Endothelial cell of umbilical vein (primary cell): ENCODE measurements at regions of chr20 and their contacts with region 1.

Region 1: DNA sequence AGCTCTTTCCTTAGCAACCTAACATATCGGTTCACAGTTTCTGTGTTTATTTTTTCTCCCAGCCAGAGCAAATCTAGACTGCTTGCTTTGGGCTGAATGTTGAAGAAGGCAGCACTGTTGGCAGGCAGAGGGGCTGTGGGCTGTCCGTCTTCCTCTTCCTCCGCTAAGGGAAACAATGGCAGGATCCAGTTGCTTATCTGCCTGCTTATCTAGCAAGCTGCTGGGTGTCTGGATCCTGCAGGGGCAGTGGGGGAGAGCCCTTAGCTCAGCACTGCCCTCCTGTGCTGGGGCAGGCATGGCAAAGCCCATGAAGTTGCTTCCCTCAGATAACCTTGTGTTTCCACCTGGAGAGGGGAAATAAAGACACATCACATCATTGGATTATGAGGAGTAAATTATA is 92.7 kb upstream of the CD93 start:
- DNase-seq: peak; percentile 96
- H3K4me3 ChIP-seq: no peak overlapping the region
- H3K27ac ChIP-seq: peak overlapping the region; percentile 56
- H3K4me1 ChIP-seq: peaks cover 21% of the 10 kb centered on the region
- H3K27me3 ChIP-seq: peaks cover 0 to 2% of the 10 kb centered on the region in 2 experiments
- CTCF ChIP-seq: peak; percentile 43 to 80
- POLR2A ChIP-seq: peak; percentile 49

Region 2: DNA sequence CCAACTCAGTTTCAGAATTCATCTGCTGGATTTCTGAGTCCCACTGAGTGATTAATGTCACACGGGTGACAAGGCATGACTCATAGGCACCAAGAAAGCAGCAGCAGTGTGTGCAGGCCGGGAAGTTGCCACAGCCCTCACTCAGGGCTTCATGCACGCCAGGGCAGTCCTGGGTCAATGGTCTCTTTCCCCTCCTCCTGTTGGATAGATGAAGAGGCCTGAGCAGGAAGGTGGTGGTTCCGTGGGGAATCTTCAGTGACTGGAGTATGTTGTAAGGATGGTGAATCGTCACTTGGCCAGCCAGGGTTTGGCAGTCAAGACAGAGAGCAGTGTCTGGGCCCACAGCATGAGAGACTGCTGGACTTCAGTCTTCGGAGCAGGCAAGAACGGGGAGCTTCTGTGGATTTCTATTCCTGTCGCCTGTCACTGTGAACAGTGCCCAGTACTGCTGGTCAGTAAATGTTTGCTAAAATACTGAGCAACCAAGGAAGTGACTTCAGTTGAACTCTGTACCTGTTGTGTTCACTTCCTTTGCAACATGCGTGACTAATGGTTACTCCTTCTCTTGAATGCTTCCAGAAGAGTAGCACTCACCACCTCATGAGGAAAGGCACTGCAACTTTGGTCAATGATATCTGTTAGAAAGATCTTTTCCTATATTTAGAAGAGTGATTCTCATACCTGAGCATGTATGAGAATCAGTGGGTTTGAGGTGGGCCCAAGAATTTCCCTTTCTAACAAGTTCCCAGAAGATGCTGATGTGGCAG is 30.7 kb before region 1 on chr20:
- CTCF ChIA-PET with region 1: interaction called, 10 read pairs
- POLR2A ChIA-PET with region 1: no interaction called
- dilution Hi-C with region 1: no loop called
- intact Hi-C with region 1: loop called (anchors 2 kb)
- DNase-seq: peak; percentile 84
- H3K4me3 ChIP-seq: no peak overlapping the region
- H3K27ac ChIP-seq: peak overlapping the region; percentile 88
- H3K4me1 ChIP-seq: peaks cover 85% of the 10 kb centered on the region
- H3K27me3 ChIP-seq: no peaks in the 10 kb centered on the region
- CTCF ChIP-seq: no peak
- POLR2A ChIP-seq: no peak

Region 3: GRCh38 chr20:23161968-23162696 is 16.7 kb before region 1 on chr20:
- CTCF ChIA-PET with region 1: interaction called, 38 read pairs
- POLR2A ChIA-PET with region 1: interaction called, 3 read pairs
- dilution Hi-C with region 1: no loop called
- intact Hi-C with region 1: no loop called
- DNase-seq: peak; percentile 58
- H3K4me3 ChIP-seq: no peak overlapping the region
- H3K27ac ChIP-seq: peak overlapping the region; percentile 49
- H3K4me1 ChIP-seq: peaks cover 35% of the 10 kb centered on the region
- H3K27me3 ChIP-seq: no peaks in the 10 kb centered on the region
- CTCF ChIP-seq: no peak
- POLR2A ChIP-seq: no peak